Caco-2 (cell line): ENCODE measurements at regions of chr5 and their contacts with region 1.

Region 1: DNA sequence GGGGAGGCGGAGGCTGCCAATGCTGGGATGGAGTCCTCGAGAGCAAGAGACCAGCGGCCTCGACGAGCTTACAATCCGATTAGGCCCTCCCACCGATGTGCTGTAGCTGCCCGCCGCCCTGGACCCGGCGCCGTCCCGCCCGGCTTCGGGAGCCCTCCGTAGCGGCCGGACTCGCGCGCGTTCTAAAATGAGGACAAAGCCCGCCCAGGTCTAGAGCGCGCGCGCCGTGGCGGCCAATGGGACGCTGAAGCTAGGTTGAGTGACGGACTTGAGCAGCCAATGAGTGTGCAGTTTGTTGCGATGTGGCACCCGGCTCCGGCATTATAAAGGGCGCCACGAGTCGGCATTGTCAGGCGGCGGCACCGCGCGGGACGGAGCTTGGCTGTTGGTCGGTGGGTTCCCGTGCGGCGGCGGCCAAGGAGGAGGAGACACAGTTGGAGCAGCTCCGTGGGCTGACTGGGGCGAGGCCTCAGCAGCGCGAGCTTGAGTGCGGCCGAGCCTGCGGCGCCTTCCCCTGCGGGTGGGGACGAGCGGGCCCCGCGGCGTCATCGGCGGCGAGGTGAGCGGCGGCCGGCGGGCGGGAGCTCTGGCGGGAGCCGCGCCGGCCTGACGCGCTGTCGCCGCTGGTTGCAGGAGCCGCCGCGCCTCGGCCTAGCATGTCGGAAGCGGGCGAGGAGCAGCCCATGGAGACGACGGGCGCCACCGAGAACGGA is at the start of gene HNRNPAB:
- DNase-seq: peak; percentile 95 to 96
- H3K4me3 ChIP-seq: peak within 1 kb of the TSS; percentile 93
- H3K4me3 Mint-ChIP-seq: peak within 1 kb of the TSS; percentile 86
- H3K27ac Mint-ChIP-seq: peak within 1 kb of the TSS; percentile 98
- H3K4me1 ChIP-seq: peaks cover 9% of the 10 kb centered on the region; the same call in 1 of the 2 replicates
- H3K4me1 Mint-ChIP-seq: peaks cover 18% of the 10 kb centered on the region
- H3K27me3 ChIP-seq: no peaks in the 10 kb centered on the region
- H3K27me3 Mint-ChIP-seq: peaks cover 2% of the 10 kb centered on the region
- CTCF ChIP-seq: no peak
- total RNA-seq, gene HNRNPAB: 286 and 295 TPM in 2 replicates

Region 2: GRCh38 chr5:178130604-178131485 is 73.5 kb before region 1 on chr5 and contains the start of gene RMND5B:
- CTCF ChIA-PET with region 1: no interaction called
- POLR2A ChIA-PET with region 1: no interaction called
- intact Hi-C with region 1: no loop called
- DNase-seq: peak; percentile 89 to 93
- H3K4me3 ChIP-seq: peak within 1 kb of the TSS; percentile 94
- H3K4me3 Mint-ChIP-seq: peak within 1 kb of the TSS; percentile 75
- H3K27ac Mint-ChIP-seq: peak within 1 kb of the TSS; percentile 72
- H3K4me1 ChIP-seq: peaks cover 6% of the 10 kb centered on the region; the same call in 1 of the 2 replicates
- H3K4me1 Mint-ChIP-seq: peaks cover 8% of the 10 kb centered on the region
- H3K27me3 ChIP-seq: no peaks in the 10 kb centered on the region
- H3K27me3 Mint-ChIP-seq: no peaks in the 10 kb centered on the region
- CTCF ChIP-seq: no peak
- total RNA-seq, gene RMND5B: 45.6 and 48.4 TPM in 2 replicates

Region 3: GRCh38 chr5:178153573-178154343 is 50.6 kb before region 1 on chr5 and contains the start of gene NHP2:
- CTCF ChIA-PET with region 1: no interaction called
- POLR2A ChIA-PET with region 1: interaction called, 16 read pairs
- intact Hi-C with region 1: no loop called
- DNase-seq: peak; percentile 98
- H3K4me3 ChIP-seq: peak within 1 kb of the TSS; percentile 65
- H3K4me3 Mint-ChIP-seq: peak within 1 kb of the TSS; percentile 94
- H3K27ac Mint-ChIP-seq: peak within 1 kb of the TSS; percentile 92
- H3K4me1 ChIP-seq: peaks cover 5% of the 10 kb centered on the region
- H3K4me1 Mint-ChIP-seq: no peaks in the 10 kb centered on the region
- H3K27me3 ChIP-seq: no peaks in the 10 kb centered on the region
- H3K27me3 Mint-ChIP-seq: no peaks in the 10 kb centered on the region
- CTCF ChIP-seq: no peak
- total RNA-seq, gene NHP2: 127 and 142 TPM in 2 replicates

Region 4: GRCh38 chr5:178232124-178232919 is 28.0 kb after region 1 on chr5 and contains the start of gene PHYKPL:
- CTCF ChIA-PET with region 1: no interaction called
- POLR2A ChIA-PET with region 1: interaction called, 15 read pairs
- intact Hi-C with region 1: loop called (anchors 1 kb)
- DNase-seq: peak; percentile 72 to 81
- H3K4me3 ChIP-seq: peak within 1 kb of the TSS; percentile 78
- H3K4me3 Mint-ChIP-seq: peak within 1 kb of the TSS; percentile 79
- H3K27ac Mint-ChIP-seq: peak within 1 kb of the TSS; percentile 77
- H3K4me1 ChIP-seq: peaks cover 20% of the 10 kb centered on the region
- H3K4me1 Mint-ChIP-seq: peaks cover 21% of the 10 kb centered on the region
- H3K27me3 ChIP-seq: no peaks in the 10 kb centered on the region
- H3K27me3 Mint-ChIP-seq: no peaks in the 10 kb centered on the region
- CTCF ChIP-seq: peak in 1 of 2 experiments; percentile 15
- total RNA-seq, gene PHYKPL: 78.2 and 82.1 TPM in 2 replicates

Region 5: DNA sequence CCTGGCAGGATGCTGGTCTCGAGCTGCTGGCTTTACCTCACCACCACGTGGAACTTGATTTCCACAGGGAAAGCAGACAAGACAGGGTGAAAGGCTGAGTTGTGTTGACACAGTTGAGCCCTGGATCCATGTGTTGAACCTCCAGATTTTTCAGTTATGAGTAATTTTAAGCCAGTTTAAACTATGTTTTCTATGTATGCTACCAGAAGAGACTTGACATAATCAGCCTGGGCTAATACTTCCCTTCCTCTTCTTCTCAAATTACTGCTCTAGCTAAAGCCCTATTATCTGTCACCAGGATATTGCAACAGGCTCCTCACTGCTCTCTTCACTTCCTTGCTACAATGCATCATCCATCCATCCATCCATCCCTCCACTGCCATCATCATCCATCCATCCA is 40.2 kb after region 1 on chr5:
- CTCF ChIA-PET with region 1: no interaction called
- POLR2A ChIA-PET with region 1: no interaction called
- intact Hi-C with region 1: no loop called
- DNase-seq: no peak
- H3K4me3 ChIP-seq: no peak overlapping the region
- H3K4me3 Mint-ChIP-seq: no peak overlapping the region
- H3K27ac Mint-ChIP-seq: no peak overlapping the region
- H3K4me1 ChIP-seq: no peaks in the 10 kb centered on the region
- H3K4me1 Mint-ChIP-seq: no peaks in the 10 kb centered on the region
- H3K27me3 ChIP-seq: no peaks in the 10 kb centered on the region; the same call in 1 of the 2 replicates
- H3K27me3 Mint-ChIP-seq: no peaks in the 10 kb centered on the region
- CTCF ChIP-seq: no peak

Region 6: DNA sequence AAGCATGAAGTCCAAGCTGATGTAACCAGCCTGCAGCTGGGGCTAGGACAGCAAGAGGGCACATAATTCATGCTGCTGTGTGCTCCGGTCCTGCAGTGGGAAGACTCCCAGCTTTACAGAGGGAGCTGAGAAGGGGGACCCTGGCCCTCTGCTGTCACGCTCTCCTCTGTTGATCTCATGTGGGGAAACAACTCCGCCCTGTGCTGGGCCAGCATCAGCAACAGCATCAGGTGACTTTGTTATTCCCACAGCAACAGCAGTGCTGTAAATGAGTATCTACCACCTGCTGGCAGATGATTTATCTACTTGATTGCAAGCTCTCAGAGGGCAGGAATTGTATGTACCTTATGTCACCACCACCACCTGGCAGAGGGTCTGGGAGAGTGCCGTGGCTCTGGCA is 209.7 kb after region 1 on chr5:
- CTCF ChIA-PET with region 1: no interaction called
- POLR2A ChIA-PET with region 1: no interaction called
- intact Hi-C with region 1: no loop called
- DNase-seq: no peak
- H3K4me3 ChIP-seq: no peak overlapping the region
- H3K4me3 Mint-ChIP-seq: no peak overlapping the region
- H3K27ac Mint-ChIP-seq: no peak overlapping the region
- H3K4me1 ChIP-seq: no peaks in the 10 kb centered on the region
- H3K4me1 Mint-ChIP-seq: no peaks in the 10 kb centered on the region
- H3K27me3 ChIP-seq: no peaks in the 10 kb centered on the region
- H3K27me3 Mint-ChIP-seq: peaks cover 9% of the 10 kb centered on the region
- CTCF ChIP-seq: no peak

Region 7: DNA sequence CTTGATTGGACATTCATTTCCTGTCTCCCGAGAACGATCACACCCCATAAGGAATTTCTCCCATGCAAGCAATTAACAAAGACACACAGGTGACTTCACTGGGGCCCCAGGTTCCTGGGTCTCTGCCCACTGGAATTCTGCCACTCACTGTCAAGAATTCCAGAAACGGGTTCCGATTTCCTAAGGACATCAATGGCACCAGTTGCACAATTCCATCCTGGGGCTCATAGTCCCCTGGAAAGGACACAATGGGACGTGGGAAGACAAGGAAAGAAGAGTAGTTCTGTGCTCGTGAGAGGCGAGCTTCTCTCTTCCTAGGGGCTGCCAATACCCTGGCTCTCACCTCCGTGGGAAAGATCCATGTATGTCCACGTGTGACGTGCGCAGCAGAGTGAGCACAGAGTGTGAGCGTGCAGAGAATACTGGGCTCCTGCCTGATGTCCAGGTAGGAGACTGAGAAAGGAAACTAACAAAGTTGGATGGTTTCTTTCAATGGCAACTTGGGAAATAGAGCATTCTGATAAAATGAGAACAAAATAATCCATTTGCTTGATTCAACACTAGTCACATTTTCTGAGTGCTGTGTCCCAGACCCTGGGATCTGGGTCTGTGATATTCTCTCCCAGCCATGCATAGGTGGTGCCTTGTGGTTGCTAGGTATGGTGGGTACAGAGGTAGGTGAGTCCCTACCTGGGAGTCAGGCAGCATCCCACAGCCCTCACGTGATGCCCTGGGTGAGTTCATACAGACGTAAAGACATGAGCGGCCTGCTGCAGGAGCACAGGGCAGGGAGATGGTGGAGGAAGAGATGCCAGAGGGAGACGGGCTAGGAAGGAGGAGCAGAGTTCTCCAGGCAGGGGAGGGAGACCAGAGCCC is 226.1 kb after region 1 on chr5:
- CTCF ChIA-PET with region 1: no interaction called
- POLR2A ChIA-PET with region 1: interaction called, 12 read pairs
- intact Hi-C with region 1: no loop called
- DNase-seq: no peak
- H3K4me3 ChIP-seq: no peak overlapping the region
- H3K4me3 Mint-ChIP-seq: no peak overlapping the region
- H3K27ac Mint-ChIP-seq: no peak overlapping the region
- H3K4me1 ChIP-seq: no peaks in the 10 kb centered on the region
- H3K4me1 Mint-ChIP-seq: no peaks in the 10 kb centered on the region
- H3K27me3 ChIP-seq: no peaks in the 10 kb centered on the region
- H3K27me3 Mint-ChIP-seq: peaks cover 6% of the 10 kb centered on the region
- CTCF ChIP-seq: no peak